PC-3 (cell line): ENCODE measurements at regions of chr1 and their contacts with region 1.

Region 1: DNA sequence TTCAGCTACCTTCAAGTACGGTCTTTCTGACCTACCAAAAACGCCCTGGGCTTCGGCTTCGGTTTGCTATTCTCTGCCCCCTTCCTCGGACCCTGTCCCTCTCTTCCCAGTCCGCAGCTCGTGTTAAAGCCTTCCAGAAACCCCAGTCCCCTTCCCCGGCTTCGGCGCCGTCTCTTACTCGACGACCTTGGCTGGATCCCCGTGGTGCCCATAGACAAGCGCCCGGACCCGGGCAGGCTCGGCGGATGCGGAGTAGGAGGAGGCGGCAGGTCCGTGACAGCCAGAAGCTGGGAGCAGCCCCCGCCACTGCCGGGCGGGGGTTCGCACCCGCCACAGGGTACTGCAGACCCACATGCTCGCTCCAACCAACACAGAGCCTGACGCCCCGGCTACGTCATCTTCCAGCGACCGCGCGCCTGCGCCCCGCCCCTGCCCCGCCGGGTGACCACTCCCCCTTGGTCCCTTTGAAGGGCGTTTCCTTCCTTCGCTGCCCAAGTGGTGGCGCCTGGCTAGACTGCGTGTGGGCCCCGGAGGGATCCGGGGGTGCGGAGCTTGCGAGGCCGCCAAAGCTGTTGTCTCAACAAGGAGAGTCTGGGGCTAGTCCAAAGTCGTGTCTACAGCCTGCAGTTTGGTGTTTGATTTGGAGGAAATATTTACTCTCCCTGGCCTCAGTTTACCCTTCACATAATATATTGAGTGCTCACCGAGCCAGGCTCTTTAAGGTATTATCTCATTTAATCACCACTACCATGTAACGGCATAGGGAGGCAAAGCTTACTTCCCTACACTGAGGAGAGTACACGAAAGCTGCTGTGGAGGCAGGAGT is at the start of gene MECR:
- DNase-seq: peak; percentile 92
- ATAC-seq: peak; percentile 94
- H3K4me3 ChIP-seq: peak within 1 kb of the TSS; percentile 85
- H3K27ac ChIP-seq: peak within 1 kb of the TSS; percentile 2; the same call in 1 of the 2 replicates
- H3K4me1 ChIP-seq: peaks cover 10% of the 10 kb centered on the region
- H3K27me3 ChIP-seq: no peaks in the 10 kb centered on the region
- CTCF ChIP-seq: peak; percentile 43; the same call in 1 of the 2 replicates
- total RNA-seq, gene MECR: 25.3 and 30.5 TPM in 2 replicates

Region 2: GRCh38 chr1:29297450-29297849 is 66.7 kb after region 1 on chr1:
- CTCF ChIA-PET with region 1: no interaction called
- POLR2A ChIA-PET with region 1: interaction called, 27 read pairs
- intact Hi-C with region 1: no loop called
- DNase-seq: no peak
- ATAC-seq: no peak
- H3K4me3 ChIP-seq: no peak overlapping the region
- H3K27ac ChIP-seq: no peak overlapping the region
- H3K4me1 ChIP-seq: no peaks in the 10 kb centered on the region
- H3K27me3 ChIP-seq: no peaks in the 10 kb centered on the region
- CTCF ChIP-seq: no peak

Region 3: DNA sequence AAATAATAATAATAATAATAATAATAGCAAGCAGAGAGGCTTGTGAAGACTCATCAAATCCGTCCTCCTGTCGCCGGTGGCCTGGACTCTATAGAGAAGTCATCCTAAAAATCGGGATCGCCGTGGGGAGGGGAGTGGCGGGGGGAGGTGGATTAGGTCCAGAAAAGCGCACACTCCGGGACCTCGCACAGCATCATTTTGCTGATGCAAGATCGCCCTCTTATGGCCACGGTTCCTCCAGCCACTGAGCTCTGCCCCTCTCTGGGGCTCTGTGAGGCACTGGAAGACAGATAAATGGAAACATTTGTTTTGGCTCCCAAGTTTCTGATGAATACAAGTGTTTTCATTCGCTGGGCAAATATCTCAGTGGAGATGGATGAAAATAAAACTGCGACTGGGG is 880.7 kb after region 1 on chr1:
- CTCF ChIA-PET with region 1: no interaction called
- POLR2A ChIA-PET with region 1: interaction called, 3 read pairs
- intact Hi-C with region 1: loop called (anchors 10 kb)
- DNase-seq: peak; percentile 71
- ATAC-seq: peak; percentile 81
- H3K4me3 ChIP-seq: no peak overlapping the region
- H3K27ac ChIP-seq: no peak overlapping the region
- H3K4me1 ChIP-seq: no peaks in the 10 kb centered on the region
- H3K27me3 ChIP-seq: peaks cover 66% of the 10 kb centered on the region
- CTCF ChIP-seq: peak; percentile 73

Region 4: GRCh38 chr1:30379684-30380624 is 1149.2 kb after region 1 on chr1:
- CTCF ChIA-PET with region 1: interaction called, 15 read pairs
- POLR2A ChIA-PET with region 1: no interaction called
- intact Hi-C with region 1: loop called (anchors 5 kb)
- DNase-seq: peak; percentile 78
- ATAC-seq: peak; percentile 80
- H3K4me3 ChIP-seq: no peak overlapping the region
- H3K27ac ChIP-seq: no peak overlapping the region
- H3K4me1 ChIP-seq: no peaks in the 10 kb centered on the region
- H3K27me3 ChIP-seq: peaks cover 12% of the 10 kb centered on the region; the same call in 1 of the 2 replicates
- CTCF ChIP-seq: peak; percentile 78